ENCODE measurements at regions of chr11 and their contacts with region 1.

Region 1: DNA sequence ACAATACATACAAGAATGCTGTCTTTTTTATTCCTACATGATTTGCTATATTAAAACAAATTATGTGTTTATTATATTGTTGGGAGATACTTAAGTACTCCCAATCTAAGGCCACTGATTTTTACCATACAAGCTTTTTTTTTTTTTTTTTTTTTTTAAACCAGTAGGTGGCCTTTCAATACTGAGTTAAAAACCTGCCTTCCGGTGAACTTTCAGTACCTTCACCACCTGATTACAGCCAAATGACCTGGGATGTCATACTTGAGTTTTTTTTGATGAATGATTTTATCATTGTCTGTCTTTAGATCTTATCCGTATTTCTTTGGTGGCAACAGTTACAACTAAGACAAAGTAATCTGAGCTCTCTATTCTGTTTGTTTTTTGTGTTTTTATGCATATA is 94.0 kb upstream of the FOLH1 start:
- DNase-seq: peak; percentile 0
- H3K4me3 Mint-ChIP-seq: no peak overlapping the region
- H3K27ac Mint-ChIP-seq: no peak overlapping the region
- H3K4me1 Mint-ChIP-seq: no peaks in the 10 kb centered on the region
- H3K27me3 Mint-ChIP-seq: peaks cover 9% of the 10 kb centered on the region
- CTCF ChIP-seq: no peak

Region 2: DNA sequence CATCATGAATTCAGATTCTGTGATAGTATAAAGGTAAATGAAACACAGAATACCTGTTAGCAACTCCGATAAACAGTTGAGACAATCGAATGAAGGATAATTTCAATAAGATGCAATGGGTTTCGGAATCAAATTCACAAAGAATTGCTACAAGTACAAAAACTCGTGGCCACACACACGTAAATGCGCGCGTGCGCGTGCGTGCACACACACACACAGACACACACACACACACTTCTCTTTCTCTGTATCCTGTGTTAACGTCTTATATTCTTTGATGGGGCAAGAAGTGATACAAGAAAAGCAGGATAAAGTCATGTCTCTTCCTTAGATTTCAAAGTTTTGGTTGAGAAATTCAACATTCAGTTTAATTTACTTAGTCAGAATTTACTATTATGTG is 151.1 kb before region 1 on chr11:
- CTCF ChIA-PET with region 1: no interaction called
- POLR2A ChIA-PET with region 1: no interaction called
- intact Hi-C with region 1: no loop called
- DNase-seq: no peak
- H3K4me3 Mint-ChIP-seq: no peak overlapping the region
- H3K27ac Mint-ChIP-seq: no peak overlapping the region
- H3K4me1 Mint-ChIP-seq: no peaks in the 10 kb centered on the region
- H3K27me3 Mint-ChIP-seq: no peaks in the 10 kb centered on the region
- CTCF ChIP-seq: no peak

Region 3: GRCh38 chr11:49316180-49316579 is 13.8 kb after region 1 on chr11:
- CTCF ChIA-PET with region 1: no interaction called
- POLR2A ChIA-PET with region 1: no interaction called
- intact Hi-C with region 1: no loop called
- DNase-seq: no peak
- H3K4me3 Mint-ChIP-seq: no peak overlapping the region
- H3K27ac Mint-ChIP-seq: no peak overlapping the region
- H3K4me1 Mint-ChIP-seq: no peaks in the 10 kb centered on the region
- H3K27me3 Mint-ChIP-seq: no peaks in the 10 kb centered on the region
- CTCF ChIP-seq: no peak

Region 4: DNA sequence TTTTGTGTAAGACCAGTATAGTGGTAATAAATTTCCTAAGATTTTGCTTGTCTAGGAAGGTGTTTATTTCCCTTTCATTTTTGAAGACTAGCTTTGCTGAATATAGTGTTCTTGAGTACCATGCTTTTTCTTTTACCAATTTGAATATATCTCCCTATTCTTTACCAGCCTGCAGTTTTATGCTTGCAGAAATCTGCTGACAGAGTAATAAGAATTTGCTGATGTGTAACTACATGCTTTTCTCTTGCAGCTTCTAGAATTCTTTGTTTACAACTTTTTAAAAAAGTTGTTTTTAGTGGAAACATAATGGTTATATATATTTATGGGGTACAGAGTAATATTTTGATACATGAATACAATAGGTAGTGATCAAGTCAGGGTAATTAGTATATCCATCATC is 230.8 kb after region 1 on chr11:
- CTCF ChIA-PET with region 1: no interaction called
- POLR2A ChIA-PET with region 1: no interaction called
- intact Hi-C with region 1: loop called (anchors 10 kb)
- DNase-seq: no peak
- H3K4me3 Mint-ChIP-seq: no peak overlapping the region
- H3K27ac Mint-ChIP-seq: no peak overlapping the region
- H3K4me1 Mint-ChIP-seq: no peaks in the 10 kb centered on the region
- H3K27me3 Mint-ChIP-seq: no peaks in the 10 kb centered on the region
- CTCF ChIP-seq: no peak